Activated CD8-positive, alpha-beta T cell treated with anti-CD3 and anti-CD28 coated beads, Interleukin-2, amount 10 ng/mL, durations not matched to agents 7 days and 5 days (primary cell): ENCODE measurements at regions of chr6 and their contacts with region 1.

Region 1: DNA sequence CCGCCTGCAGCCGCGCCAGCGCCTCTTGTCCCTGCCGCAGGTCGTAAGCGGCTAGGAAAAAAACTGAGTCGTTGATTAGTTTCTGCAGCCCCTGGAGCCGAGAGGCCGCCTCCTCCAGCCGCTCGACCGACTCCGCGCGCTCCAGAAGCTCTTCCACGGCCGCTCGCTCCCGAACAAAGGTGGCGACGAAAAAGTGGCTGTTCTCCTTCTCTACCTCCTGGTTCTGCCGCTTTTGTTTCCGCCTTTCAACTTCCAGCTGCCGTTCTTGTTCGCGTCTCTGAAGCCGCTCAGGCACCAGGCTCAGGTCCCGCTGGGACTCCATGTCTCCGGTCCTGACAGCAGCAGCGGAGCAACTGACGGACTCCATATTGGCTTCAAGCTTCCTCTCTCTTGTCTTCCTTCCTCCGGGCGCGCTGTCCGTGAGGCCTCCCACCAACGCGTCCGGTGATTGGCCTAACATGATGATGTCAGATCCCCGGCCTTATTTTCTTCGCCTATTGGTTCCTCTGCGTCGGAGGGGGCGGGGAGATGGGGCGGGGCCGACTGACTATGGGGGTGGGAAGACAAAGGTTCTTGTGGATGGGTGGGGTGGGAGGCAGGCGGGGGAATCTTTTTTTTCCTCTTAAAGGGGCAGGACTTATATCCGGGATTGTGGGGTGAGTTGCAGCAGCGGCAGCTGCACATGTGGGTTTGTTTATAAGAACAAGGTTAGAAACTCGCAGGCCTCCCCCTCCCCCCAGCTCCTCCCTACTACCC is at the start of gene TBCC:
- DNase-seq: peak; percentile 97
- ATAC-seq: peak; percentile 82
- H3K4me3 Mint-ChIP-seq: peak within 1 kb of the TSS; percentile 100
- H3K27ac Mint-ChIP-seq: peak within 1 kb of the TSS; percentile 100
- H3K4me1 Mint-ChIP-seq: peaks cover 35% of the 10 kb centered on the region
- H3K27me3 Mint-ChIP-seq: peaks cover under 1% of the 10 kb centered on the region
- total RNA-seq, gene TBCC: 26.7 to 29.1 TPM

Region 2: GRCh38 chr6:42563697-42564505 is 182.0 kb before region 1 on chr6 and contains the start of gene UBR2:
- CTCF ChIA-PET with region 1: interaction called, 3 read pairs
- POLR2A ChIA-PET with region 1: interaction called, 11 read pairs
- DNase-seq: peak; percentile 97
- ATAC-seq: peak; percentile 96
- H3K4me3 Mint-ChIP-seq: peak within 1 kb of the TSS; percentile 96
- H3K27ac Mint-ChIP-seq: peak within 1 kb of the TSS; percentile 91
- H3K4me1 Mint-ChIP-seq: peaks cover 34% of the 10 kb centered on the region
- H3K27me3 Mint-ChIP-seq: peaks cover 3% of the 10 kb centered on the region
- total RNA-seq, gene UBR2: 23.6 to 24.8 TPM

Region 3: GRCh38 chr6:42692137-42692911 is 53.6 kb before region 1 on chr6:
- CTCF ChIA-PET with region 1: no interaction called
- POLR2A ChIA-PET with region 1: interaction called, 10 read pairs
- DNase-seq: peak; percentile 25
- ATAC-seq: peak; percentile 35
- H3K4me3 Mint-ChIP-seq: no peak overlapping the region
- H3K27ac Mint-ChIP-seq: peak overlapping the region; percentile 88
- H3K4me1 Mint-ChIP-seq: peaks cover 43% of the 10 kb centered on the region
- H3K27me3 Mint-ChIP-seq: no peaks in the 10 kb centered on the region

Region 4: DNA sequence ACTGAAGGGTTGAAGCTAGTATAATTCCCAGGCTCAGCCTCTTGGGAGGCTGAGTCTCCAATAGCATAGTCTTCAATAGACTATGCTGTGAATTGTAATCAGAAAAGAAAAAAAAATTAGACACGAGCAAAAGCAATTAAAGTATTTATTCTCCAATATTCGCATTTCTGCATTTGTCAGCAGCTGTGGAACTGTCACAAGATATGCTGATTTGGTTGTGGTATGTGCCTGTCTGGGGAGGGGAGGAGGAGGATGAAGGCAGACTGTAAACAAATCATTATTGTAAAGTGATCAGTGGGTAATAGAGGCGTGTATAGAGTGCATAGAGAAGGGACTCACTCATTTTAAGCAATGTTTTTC is 25.8 kb after region 1 on chr6:
- CTCF ChIA-PET with region 1: interaction called, 32 read pairs
- POLR2A ChIA-PET with region 1: interaction called, 175 read pairs
- DNase-seq: peak; percentile 33
- ATAC-seq: peak; percentile 27
- H3K4me3 Mint-ChIP-seq: peak overlapping the region; percentile 72
- H3K27ac Mint-ChIP-seq: peak overlapping the region; percentile 100
- H3K4me1 Mint-ChIP-seq: peaks cover 51% of the 10 kb centered on the region
- H3K27me3 Mint-ChIP-seq: no peaks in the 10 kb centered on the region

Region 5: DNA sequence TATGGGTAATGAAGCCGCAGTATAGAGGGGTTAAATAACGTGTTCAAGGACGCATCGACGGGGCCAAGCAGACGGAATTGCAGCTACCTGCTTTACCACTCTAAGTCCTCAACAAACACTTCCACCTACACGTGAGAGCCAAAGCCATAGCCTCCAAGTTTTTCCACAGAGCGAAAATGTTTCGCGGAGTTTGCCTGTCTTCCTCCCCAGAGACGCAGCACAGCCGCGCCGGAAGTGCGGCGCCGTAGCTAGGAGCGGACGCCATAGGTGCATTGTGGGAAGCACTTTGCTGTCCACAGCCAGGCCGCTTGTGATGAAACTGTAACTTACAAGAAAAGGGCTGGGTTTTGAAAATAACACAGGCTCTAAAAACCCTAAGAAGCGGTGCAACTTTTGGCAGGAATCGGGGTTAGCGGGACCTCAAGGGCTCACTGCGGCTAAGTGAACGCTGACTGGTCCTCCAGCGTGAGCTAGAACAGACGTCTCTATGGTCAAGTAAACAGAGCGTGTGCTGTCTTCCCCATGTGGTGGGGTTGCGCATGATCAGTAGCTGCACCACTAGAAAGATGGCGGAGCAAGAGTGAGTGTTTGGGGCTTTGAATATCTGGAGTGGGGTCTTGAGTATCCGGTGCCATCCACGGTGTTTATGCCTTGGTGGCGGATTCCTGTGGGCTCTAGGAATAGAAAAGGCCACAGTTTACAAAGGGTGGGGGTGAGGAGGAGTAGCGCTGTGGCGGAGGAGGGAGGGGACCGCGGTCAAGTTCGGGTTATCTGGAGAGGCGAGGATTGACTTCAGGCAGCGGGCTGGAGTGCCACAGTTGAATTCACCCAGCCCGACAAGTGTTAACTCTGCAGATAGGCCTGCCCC is 133.7 kb after region 1 on chr6 and contains the start of gene RPL7L1:
- CTCF ChIA-PET with region 1: interaction called, 19 read pairs
- POLR2A ChIA-PET with region 1: interaction called, 48 read pairs
- DNase-seq: peak; percentile 90
- ATAC-seq: peak; percentile 96
- H3K4me3 Mint-ChIP-seq: peak within 1 kb of the TSS; percentile 100
- H3K27ac Mint-ChIP-seq: peak within 1 kb of the TSS; percentile 100
- H3K4me1 Mint-ChIP-seq: peaks cover 25% of the 10 kb centered on the region
- H3K27me3 Mint-ChIP-seq: no peaks in the 10 kb centered on the region
- total RNA-seq, gene RPL7L1: 74.1 to 77.9 TPM

Region 6: GRCh38 chr6:42928986-42929820 is 183.3 kb after region 1 on chr6 and contains the start of gene CNPY3:
- CTCF ChIA-PET with region 1: no interaction called
- POLR2A ChIA-PET with region 1: interaction called, 10 read pairs
- DNase-seq: peak; percentile 98
- ATAC-seq: peak; percentile 87
- H3K4me3 Mint-ChIP-seq: peak within 1 kb of the TSS; percentile 90
- H3K27ac Mint-ChIP-seq: peak within 1 kb of the TSS; percentile 94
- H3K4me1 Mint-ChIP-seq: peaks cover 41% of the 10 kb centered on the region
- H3K27me3 Mint-ChIP-seq: no peaks in the 10 kb centered on the region
- total RNA-seq, gene CNPY3: 86.0 to 87.6 TPM

Region 7: DNA sequence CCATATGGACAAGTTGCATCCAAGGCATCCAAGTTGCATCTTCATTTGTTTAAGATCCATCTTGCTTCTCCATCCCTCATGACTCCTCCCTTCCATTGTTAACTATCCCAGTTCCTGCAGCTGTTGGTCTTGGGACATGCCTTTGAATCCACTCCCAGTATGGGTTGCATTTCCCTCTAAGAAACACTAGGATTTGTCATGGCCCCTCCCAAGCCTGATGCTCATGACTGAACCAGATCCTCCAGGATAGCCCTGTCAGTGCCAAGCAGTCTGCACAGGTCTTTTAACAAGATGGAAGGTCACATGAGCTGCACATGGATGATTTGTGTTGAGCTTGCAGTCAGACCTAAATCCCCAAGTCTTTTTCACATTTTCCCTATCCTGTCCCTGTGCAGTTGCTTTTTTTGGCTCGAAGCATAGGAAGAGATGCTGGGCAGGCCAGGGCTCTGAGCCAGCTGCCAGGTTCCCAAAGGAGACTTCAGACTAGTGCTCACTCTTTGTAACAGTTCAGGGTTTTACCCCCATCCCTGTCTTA is 242.7 kb after region 1 on chr6:
- CTCF ChIA-PET with region 1: no interaction called
- POLR2A ChIA-PET with region 1: no interaction called
- DNase-seq: no peak
- ATAC-seq: no peak
- H3K4me3 Mint-ChIP-seq: no peak overlapping the region
- H3K27ac Mint-ChIP-seq: no peak overlapping the region
- H3K4me1 Mint-ChIP-seq: peaks cover 34% of the 10 kb centered on the region
- H3K27me3 Mint-ChIP-seq: no peaks in the 10 kb centered on the region